ENCODE measurements at regions of chr2 and their contacts with region 1.

Region 1: DNA sequence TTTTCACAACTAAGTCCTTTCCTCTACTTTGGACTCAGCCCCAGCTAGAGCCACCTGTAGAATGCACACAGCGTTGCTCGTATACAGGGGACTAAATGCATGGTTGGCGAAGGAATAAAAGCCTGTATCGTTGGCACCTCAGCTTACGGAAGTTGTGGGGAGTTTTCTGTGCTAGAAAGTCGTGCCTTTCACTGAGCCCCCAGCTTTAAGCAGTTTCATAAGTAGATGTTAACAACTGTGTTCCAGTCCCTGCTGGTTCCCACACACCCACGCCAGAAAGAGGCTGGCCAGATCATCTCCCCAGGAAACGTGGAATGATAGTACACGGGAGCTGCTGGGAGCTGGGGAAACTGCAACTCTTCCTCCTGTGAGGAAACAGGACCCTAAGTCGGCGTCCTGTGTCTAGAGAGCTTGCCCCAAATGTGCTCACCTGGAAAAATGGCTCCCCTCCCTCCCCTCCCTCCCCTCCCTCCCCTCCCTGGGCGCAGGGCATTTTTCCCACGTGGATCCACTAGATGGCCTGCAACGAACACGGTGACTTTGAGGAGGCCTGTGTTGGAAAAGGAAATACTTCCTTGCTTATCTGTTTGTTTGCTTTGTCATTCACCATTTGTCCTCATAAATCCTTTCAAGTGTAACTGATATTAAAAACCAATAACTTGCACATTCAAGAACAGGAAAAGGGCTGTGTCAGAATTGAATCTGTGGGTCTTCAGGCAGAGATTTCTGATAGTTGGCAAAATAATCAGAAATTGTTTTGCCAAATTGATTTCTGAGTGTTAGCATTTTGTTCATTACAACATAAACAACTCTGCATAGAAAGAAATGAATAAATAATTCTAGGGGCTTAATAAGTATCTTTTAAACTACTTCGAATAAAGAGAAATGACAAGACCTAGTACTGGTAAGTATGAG is 43.9 kb upstream of the RFX8 start:
- DNase-seq: peak; percentile 61
- H3K4me3 ChIP-seq: no peak overlapping the region
- H3K27ac ChIP-seq: peak overlapping the region; percentile 94
- H3K4me1 ChIP-seq: peaks cover 57% of the 10 kb centered on the region
- H3K27me3 ChIP-seq: no peaks in the 10 kb centered on the region
- CTCF ChIP-seq: peak; percentile 18 to 49
- POLR2A ChIP-seq: no peak

Region 2: GRCh38 chr2:101419096-101419663 is 99.7 kb before region 1 on chr2:
- CTCF ChIA-PET with region 1: interaction called, 8 read pairs
- POLR2A ChIA-PET with region 1: no interaction called
- dilution Hi-C with region 1: no loop called
- intact Hi-C with region 1: loop called (anchors 1 kb)
- DNase-seq: peak; percentile 69
- H3K4me3 ChIP-seq: no peak overlapping the region
- H3K27ac ChIP-seq: no peak overlapping the region
- H3K4me1 ChIP-seq: no peaks in the 10 kb centered on the region
- H3K27me3 ChIP-seq: no peaks in the 10 kb centered on the region
- CTCF ChIP-seq: peak; percentile 59 to 63
- POLR2A ChIP-seq: no peak

Region 3: GRCh38 chr2:101463891-101464641 is 54.8 kb before region 1 on chr2:
- CTCF ChIA-PET with region 1: interaction called, 4 read pairs
- POLR2A ChIA-PET with region 1: no interaction called
- dilution Hi-C with region 1: no loop called
- intact Hi-C with region 1: loop called (anchors 1 kb)
- DNase-seq: peak; percentile 95
- H3K4me3 ChIP-seq: no peak overlapping the region
- H3K27ac ChIP-seq: peak overlapping the region; percentile 89
- H3K4me1 ChIP-seq: peaks cover 39% of the 10 kb centered on the region
- H3K27me3 ChIP-seq: no peaks in the 10 kb centered on the region
- CTCF ChIP-seq: no peak
- POLR2A ChIP-seq: peak; percentile 64

Region 4: GRCh38 chr2:101479328-101479727 is 39.5 kb before region 1 on chr2:
- CTCF ChIA-PET with region 1: no interaction called
- POLR2A ChIA-PET with region 1: no interaction called
- dilution Hi-C with region 1: no loop called
- intact Hi-C with region 1: no loop called
- DNase-seq: no peak
- H3K4me3 ChIP-seq: no peak overlapping the region
- H3K27ac ChIP-seq: no peak overlapping the region
- H3K4me1 ChIP-seq: peaks cover 2% of the 10 kb centered on the region
- H3K27me3 ChIP-seq: no peaks in the 10 kb centered on the region
- CTCF ChIP-seq: no peak
- POLR2A ChIP-seq: no peak

Region 5: DNA sequence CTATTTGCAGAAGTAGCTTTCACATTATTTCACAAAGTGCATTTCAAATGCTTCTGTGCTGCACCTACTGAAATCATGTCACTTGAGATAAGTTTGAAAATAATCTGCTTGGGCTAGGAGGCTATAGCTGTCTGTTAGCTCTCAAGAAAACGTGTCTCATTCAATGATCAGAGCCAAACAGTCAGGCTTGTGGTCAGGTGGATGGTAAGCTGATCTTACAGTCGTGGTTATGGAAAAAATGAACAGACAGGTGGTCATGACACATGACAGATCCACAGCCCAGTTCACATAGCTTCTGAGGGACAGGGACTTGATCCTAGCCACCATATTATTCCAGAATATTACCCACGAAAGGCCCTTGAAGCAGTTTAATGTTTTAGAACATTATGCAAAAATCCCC is 17.4 kb before region 1 on chr2:
- CTCF ChIA-PET with region 1: interaction called, 5 read pairs
- POLR2A ChIA-PET with region 1: no interaction called
- dilution Hi-C with region 1: no loop called
- intact Hi-C with region 1: loop called (anchors 2 kb)
- DNase-seq: no peak
- H3K4me3 ChIP-seq: no peak overlapping the region
- H3K27ac ChIP-seq: no peak overlapping the region
- H3K4me1 ChIP-seq: peaks cover 7% of the 10 kb centered on the region
- H3K27me3 ChIP-seq: no peaks in the 10 kb centered on the region
- CTCF ChIP-seq: no peak
- POLR2A ChIP-seq: no peak

Region 6: GRCh38 chr2:101619191-101619591 is 100.4 kb after region 1 on chr2:
- CTCF ChIA-PET with region 1: no interaction called
- POLR2A ChIA-PET with region 1: no interaction called
- dilution Hi-C with region 1: no loop called
- intact Hi-C with region 1: loop called (anchors 1 kb)
- DNase-seq: peak; percentile 94
- H3K4me3 ChIP-seq: peak overlapping the region in 1 of 3 experiments; percentile 13
- H3K27ac ChIP-seq: no peak overlapping the region
- H3K4me1 ChIP-seq: peaks cover 7% of the 10 kb centered on the region
- H3K27me3 ChIP-seq: no peaks in the 10 kb centered on the region
- CTCF ChIP-seq: no peak
- POLR2A ChIP-seq: no peak

Region 7: GRCh38 chr2:101759162-101759561 is 240.3 kb after region 1 on chr2:
- CTCF ChIA-PET with region 1: interaction called, 3 read pairs
- POLR2A ChIA-PET with region 1: no interaction called
- dilution Hi-C with region 1: no loop called
- intact Hi-C with region 1: loop called (anchors 1 kb)
- DNase-seq: peak; percentile 95
- H3K4me3 ChIP-seq: no peak overlapping the region
- H3K27ac ChIP-seq: peak overlapping the region; percentile 73
- H3K4me1 ChIP-seq: peaks cover 41% of the 10 kb centered on the region
- H3K27me3 ChIP-seq: no peaks in the 10 kb centered on the region
- CTCF ChIP-seq: no peak
- POLR2A ChIP-seq: no peak

Region 8: DNA sequence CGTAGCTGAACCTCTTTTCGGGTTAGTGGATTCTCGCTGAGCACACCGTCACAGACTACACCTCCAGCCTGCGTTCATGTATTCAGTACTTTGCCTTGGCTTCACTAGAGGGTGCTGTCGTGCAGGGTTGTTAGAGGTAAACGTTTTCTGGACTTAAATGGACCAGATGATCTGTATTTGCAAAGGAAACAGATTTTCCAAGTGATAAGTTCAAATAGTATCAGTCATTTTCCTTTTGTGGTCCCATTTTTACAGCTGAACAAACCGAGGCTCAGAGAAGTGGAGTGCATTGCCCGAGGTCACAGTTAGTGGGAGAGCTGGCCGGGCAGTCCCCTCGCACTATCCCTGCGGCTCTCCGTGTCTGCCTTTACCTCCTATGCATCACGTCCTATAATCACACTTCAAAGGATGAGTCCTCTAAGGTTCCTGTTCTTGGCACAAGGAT is 304.5 kb after region 1 on chr2:
- CTCF ChIA-PET with region 1: no interaction called
- POLR2A ChIA-PET with region 1: no interaction called
- dilution Hi-C with region 1: no loop called
- intact Hi-C with region 1: loop called (anchors 2 kb)
- DNase-seq: peak; percentile 79
- H3K4me3 ChIP-seq: no peak overlapping the region
- H3K27ac ChIP-seq: peak overlapping the region; percentile 30
- H3K4me1 ChIP-seq: peaks cover 54% of the 10 kb centered on the region
- H3K27me3 ChIP-seq: no peaks in the 10 kb centered on the region
- CTCF ChIP-seq: peak; percentile 54 to 67
- POLR2A ChIP-seq: no peak

Measured in endothelial cell of umbilical vein (primary cell).